H1 (cell line): ENCODE measurements at regions of chr18 and their contacts with region 1.

Region 1: DNA sequence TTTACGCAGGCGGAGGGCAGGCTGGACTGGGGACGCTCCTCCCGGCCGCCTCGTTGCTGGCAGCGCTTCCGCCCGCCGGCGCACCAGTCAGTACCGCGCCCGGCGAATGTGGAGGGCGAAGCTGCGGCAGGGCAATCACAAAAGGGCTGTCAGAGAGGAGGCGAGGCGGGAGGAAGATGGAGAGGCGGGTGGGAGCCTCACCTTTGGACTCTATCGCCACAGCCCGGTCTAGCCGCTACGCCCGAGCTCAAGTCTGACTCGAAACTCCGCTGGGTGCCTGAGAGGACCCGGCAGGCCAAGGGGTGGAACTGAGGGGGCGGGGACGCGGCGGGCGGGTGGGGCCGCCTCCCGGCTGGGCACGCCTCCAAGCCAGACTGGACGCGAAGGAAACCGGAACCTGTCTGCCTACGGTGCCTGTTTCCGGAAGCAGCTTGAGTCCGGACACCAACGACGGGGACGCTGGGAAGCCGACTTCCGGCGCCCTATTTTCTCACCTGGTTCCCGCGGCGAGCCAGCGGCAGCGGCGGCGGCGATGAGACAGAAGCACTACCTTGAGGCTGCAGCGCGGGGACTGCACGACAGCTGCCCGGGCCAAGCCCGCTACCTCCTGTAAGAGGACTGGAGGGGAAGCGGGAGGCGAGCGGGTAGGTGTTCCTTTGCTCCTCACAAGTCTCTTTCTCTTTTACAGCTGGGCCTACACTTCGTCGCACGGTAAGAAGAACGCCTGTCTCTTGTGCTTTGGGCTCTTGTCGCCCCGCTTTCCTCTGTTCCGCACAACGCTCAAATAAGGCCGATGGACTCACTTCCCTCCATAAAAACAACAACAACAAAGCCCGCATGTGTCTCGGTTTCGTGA is at the start of gene RMP24:
- DNase-seq: peak; percentile 89 to 94
- H3K4me3 ChIP-seq: peak within 1 kb of the TSS; percentile 90 to 98 (median 92)
- H3K27ac ChIP-seq: peak within 1 kb of the TSS; percentile 71
- H3K4me1 ChIP-seq: peaks cover 0 to 4% (median 2%) of the 10 kb centered on the region in 4 experiments; a peak in 2 of 7 replicates
- H3K27me3 ChIP-seq: no peaks in the 10 kb centered on the region
- CTCF ChIP-seq: no peak
- EP300 ChIP-seq: peak in 1 of 2 experiments; percentile 84; a peak in 1 of 3 replicates
- POLR2A ChIP-seq: peak; percentile 64 to 84
- RAD21 ChIP-seq: peak in 1 of 2 experiments; percentile 18; a peak in 1 of 4 replicates

Region 2: GRCh38 chr18:35993013-35993412 is 20.6 kb after region 1 on chr18:
- CTCF ChIA-PET with region 1: no interaction called
- POLR2A ChIA-PET with region 1: interaction called, 10 read pairs
- DNase-seq: no peak
- H3K4me3 ChIP-seq: no peak overlapping the region
- H3K27ac ChIP-seq: no peak overlapping the region
- H3K4me1 ChIP-seq: no peaks in the 10 kb centered on the region
- H3K27me3 ChIP-seq: no peaks in the 10 kb centered on the region
- CTCF ChIP-seq: no peak
- EP300 ChIP-seq: no peak
- POLR2A ChIP-seq: no peak
- RAD21 ChIP-seq: no peak

Region 3: DNA sequence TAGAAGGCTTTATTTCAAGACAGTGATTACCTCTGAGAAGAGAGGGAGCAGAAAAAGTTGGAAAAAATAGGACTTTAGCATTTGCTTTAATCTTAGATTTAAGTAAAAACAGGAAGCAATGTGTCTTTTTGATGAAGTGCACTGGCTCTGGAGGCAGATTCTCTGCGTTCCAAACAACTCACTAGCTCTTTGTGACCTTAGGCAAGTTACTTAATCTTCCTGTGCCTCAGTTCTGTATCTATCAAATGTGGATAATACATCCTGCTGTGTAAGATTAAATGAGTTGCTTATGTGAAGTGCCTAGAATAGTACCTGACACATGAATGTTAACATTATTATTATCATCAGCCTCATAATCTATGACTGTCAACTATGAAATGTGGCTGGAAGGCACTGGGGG is 52.6 kb after region 1 on chr18:
- CTCF ChIA-PET with region 1: no interaction called
- POLR2A ChIA-PET with region 1: no interaction called
- DNase-seq: no peak
- H3K4me3 ChIP-seq: no peak overlapping the region
- H3K27ac ChIP-seq: no peak overlapping the region
- H3K4me1 ChIP-seq: no peaks in the 10 kb centered on the region
- H3K27me3 ChIP-seq: no peaks in the 10 kb centered on the region
- CTCF ChIP-seq: no peak
- EP300 ChIP-seq: no peak
- POLR2A ChIP-seq: no peak
- RAD21 ChIP-seq: no peak